ENCODE measurements at regions of chr7 and their contacts with region 1.

Region 1: DNA sequence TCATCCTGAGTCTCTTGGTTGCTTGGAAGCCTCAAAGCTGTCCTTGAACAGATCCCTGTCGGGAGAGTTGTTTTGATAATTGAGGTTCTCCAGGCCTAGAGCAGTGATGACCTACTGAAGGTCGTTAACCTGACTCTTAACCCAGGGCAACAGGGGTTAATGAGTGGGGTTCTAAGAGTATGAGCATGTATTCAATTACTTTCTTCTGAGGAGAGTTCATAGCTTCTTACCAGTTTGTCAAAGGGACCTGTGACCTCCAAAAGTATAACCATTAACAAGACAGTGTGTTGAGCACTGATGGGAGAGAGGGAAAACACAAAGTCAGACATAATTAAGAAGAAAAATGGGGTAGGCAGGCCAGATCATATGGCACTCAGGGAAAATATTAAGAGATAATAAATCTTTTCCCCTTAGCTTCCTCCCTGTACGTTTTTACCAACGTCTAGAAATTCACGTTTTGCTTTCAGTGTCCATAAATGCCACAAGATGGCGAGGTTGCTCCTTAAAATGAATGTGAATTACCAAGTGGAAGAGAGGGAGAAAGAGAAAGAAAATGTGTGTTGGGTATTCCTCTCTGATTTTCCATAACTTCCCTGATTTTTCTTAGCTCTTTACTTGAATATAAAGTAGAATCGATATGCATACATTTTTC is 97.6 kb downstream of the SUGCT start:
- DNase-seq: no peak
- H3K4me3 ChIP-seq: no peak overlapping the region
- H3K27ac ChIP-seq: peak overlapping the region; percentile 8 to 52 (median 37)
- H3K4me1 ChIP-seq: peaks cover 0 to 9% (median 6%) of the 10 kb centered on the region in 4 donors
- H3K27me3 ChIP-seq: no peaks in the 10 kb centered on the region
- CTCF ChIP-seq: peak; percentile 64 to 70 (median 64)
- EP300 ChIP-seq: no peak
- POLR2A ChIP-seq: no peak

Region 2: DNA sequence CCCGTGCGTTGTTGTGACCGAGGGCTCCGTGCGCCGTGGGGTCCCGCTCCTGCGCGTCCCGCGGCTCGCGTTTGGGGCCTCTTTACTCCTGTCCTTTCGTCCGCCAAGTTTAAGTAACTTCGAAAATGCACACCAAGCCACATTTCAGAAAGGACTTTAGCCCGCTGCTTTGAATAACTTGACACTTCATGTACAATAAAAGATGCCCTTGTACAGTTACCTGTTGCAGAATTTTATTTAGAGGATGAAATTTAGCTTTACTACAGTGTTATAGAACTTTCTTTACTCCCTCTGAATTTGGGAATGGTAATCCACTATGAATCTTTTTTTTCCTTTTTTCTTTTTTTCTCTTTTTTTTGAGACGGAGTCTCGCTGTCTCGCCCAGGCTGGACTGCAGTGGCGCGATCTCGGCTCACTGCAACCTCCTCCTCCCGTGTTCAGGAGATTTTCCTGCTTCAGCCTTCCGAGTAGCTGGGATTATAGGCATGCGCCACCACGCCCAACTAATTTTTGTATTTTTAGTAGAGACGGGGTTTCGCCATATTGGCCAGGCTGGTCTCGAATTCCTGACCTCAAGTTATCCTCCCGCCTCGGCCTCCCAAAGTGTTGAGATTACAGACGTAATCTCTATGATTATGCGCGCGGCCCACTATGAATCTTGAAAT is 96.9 kb before region 1 on chr7:
- intact Hi-C with region 1: no loop called
- DNase-seq: no peak
- H3K4me3 ChIP-seq: peak overlapping the region; percentile 85 to 98 (median 96)
- H3K27ac ChIP-seq: peak overlapping the region; percentile 89 to 93 (median 92)
- H3K4me1 ChIP-seq: peaks cover 24 to 43% (median 38%) of the 10 kb centered on the region in 4 donors
- H3K27me3 ChIP-seq: no peaks in the 10 kb centered on the region
- CTCF ChIP-seq: no peak
- EP300 ChIP-seq: no peak
- POLR2A ChIP-seq: no peak

Region 3: GRCh38 chr7:40604601-40605438 is 372.5 kb after region 1 on chr7:
- intact Hi-C with region 1: loop called (anchors 10 kb)
- DNase-seq: no peak
- H3K4me3 ChIP-seq: no peak overlapping the region
- H3K27ac ChIP-seq: no peak overlapping the region
- H3K4me1 ChIP-seq: peaks cover 0 to 8% (median 0%) of the 10 kb centered on the region in 4 donors
- H3K27me3 ChIP-seq: no peaks in the 10 kb centered on the region
- CTCF ChIP-seq: peak; percentile 53 to 64 (median 59)
- EP300 ChIP-seq: no peak
- POLR2A ChIP-seq: no peak

Region 4: GRCh38 chr7:40763318-40764287 is 531.2 kb after region 1 on chr7:
- intact Hi-C with region 1: loop called (anchors 10 kb)
- DNase-seq: no peak
- H3K4me3 ChIP-seq: peak overlapping the region in 1 of 4 donors; percentile 27
- H3K27ac ChIP-seq: peak overlapping the region; percentile 61 to 78 (median 77)
- H3K4me1 ChIP-seq: peaks cover 7 to 59% (median 54%) of the 10 kb centered on the region in 4 donors
- H3K27me3 ChIP-seq: no peaks in the 10 kb centered on the region
- CTCF ChIP-seq: peak; percentile 19 to 53 (median 37)
- EP300 ChIP-seq: no peak
- POLR2A ChIP-seq: no peak

Measured in esophagus muscularis mucosa (tissue), 4 donors.